ENCODE measurements at regions of chr9 and their contacts with region 1.

Region 1: GRCh38 chr9:121213136-121213806 is 11.6 kb upstream of the RAB14 start:
- DNase-seq: peak; percentile 93 to 95
- H3K4me3 ChIP-seq: no peak overlapping the region
- H3K27ac ChIP-seq: peak overlapping the region in 4 of 5 donors; percentile 28 to 72 (median 60)
- H3K4me1 ChIP-seq: peaks cover 0 to 10% (median 4%) of the 10 kb centered on the region in 4 donors
- H3K27me3 ChIP-seq: no peaks in the 10 kb centered on the region
- CTCF ChIP-seq: peak in 5 of 7 experiments; percentile 87 to 93 (median 92)
- EP300 ChIP-seq: no peak
- POLR2A ChIP-seq: no peak

Region 2: DNA sequence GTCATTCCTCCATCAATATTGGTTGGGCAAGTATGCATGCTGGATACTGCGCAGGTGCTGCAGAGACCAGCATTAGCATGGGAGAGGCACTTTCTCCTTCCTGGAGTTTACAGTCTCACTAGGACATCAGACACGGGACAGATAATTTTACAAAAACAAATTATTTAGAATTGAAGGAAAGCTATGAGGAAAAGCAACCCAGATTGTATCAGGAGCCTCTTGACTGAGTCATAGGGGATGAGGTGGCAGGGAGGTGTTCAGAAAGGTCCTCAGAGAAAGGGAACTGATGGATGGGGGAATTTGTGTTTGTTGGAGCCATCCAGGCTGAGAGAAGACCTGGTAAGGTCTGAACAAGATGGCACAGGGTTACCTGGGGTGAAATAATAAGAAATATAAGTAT is 12.9 kb after region 1 on chr9:
- intact Hi-C with region 1: no loop called
- DNase-seq: no peak
- H3K4me3 ChIP-seq: no peak overlapping the region
- H3K27ac ChIP-seq: no peak overlapping the region
- H3K4me1 ChIP-seq: peaks cover 0 to 8% (median 3%) of the 10 kb centered on the region in 4 donors
- H3K27me3 ChIP-seq: no peaks in the 10 kb centered on the region
- CTCF ChIP-seq: no peak
- EP300 ChIP-seq: no peak
- POLR2A ChIP-seq: no peak

Region 3: GRCh38 chr9:121267689-121268597 is 54.7 kb after region 1 on chr9 and contains the start of gene GSN:
- intact Hi-C with region 1: loop called (anchors 5 kb)
- DNase-seq: peak; percentile 88 to 94
- H3K4me3 ChIP-seq: peak within 1 kb of the TSS; percentile 79 to 90 (median 88)
- H3K27ac ChIP-seq: peak within 1 kb of the TSS; percentile 93 to 96 (median 95)
- H3K4me1 ChIP-seq: peaks cover 40 to 64% (median 51%) of the 10 kb centered on the region in 4 donors
- H3K27me3 ChIP-seq: no peaks in the 10 kb centered on the region
- CTCF ChIP-seq: peak in 1 of 7 experiments; percentile 9
- EP300 ChIP-seq: no peak
- POLR2A ChIP-seq: peak in 1 of 4 donors; percentile 62
- total RNA-seq, gene GSN: 385 to 909 (median 565) TPM

Region 4: DNA sequence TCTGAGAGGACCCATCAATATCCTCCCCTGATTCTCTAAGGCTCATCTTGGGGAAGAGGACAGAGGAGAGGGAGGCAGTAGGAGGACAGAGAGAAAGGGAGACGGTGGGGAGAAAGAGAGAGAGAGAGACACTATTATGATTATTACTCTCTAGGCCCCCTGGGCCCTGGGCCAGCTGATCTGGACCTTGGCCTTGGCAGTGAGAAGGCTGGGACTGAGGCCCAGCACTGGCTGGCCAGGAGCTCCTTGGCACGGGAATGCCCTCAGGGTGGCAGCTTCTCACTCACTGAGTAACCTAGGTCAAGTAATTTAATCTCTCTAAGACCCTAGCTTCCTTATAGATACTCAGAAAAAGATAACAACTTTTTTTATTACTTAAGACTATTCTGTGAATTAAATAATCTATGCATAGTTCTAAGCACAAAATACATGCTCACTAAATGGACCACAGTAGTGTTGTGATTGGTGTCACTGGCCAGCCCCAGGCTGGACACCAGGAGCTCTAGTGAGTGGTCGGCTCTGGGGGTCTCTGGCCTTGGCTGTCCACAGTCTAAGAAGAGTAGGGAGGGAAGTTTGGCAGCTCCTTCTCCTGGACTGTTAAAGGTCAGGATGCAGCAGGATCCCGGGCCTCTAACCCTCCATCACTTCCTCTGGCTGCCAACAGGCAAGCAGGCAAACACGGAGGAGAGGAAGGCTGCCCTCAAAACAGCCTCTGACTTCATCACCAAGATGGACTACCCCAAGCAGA is 104.6 kb after region 1 on chr9:
- intact Hi-C with region 1: loop called (anchors 10 kb)
- DNase-seq: peak in 1 of 2 donors; percentile 79
- H3K4me3 ChIP-seq: no peak overlapping the region
- H3K27ac ChIP-seq: peak overlapping the region; percentile 19 to 96 (median 86)
- H3K4me1 ChIP-seq: peaks cover 15 to 78% (median 52%) of the 10 kb centered on the region in 4 donors
- H3K27me3 ChIP-seq: no peaks in the 10 kb centered on the region
- CTCF ChIP-seq: no peak
- EP300 ChIP-seq: no peak
- POLR2A ChIP-seq: no peak

Region 5: DNA sequence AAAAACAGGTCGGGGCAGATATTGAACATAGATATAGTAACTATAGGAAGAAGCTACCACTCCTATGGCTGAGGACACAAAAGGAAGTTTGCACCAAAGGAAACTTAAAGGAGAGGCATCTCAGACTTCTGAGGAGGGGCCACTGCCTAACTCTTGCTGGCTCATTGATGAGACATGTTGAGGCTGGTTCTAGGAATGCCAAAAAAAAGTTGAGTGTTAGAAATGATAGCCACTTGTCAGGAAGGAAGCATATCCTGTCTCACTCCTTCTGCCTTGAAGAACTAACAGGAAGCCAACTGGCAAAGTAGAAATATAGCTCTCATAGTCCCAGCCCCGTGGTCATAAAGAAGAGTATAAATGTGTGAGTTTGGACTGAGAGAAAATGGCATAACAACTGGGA is 180.0 kb after region 1 on chr9:
- intact Hi-C with region 1: loop called (anchors 5 kb)
- DNase-seq: no peak
- H3K4me3 ChIP-seq: no peak overlapping the region
- H3K27ac ChIP-seq: no peak overlapping the region
- H3K4me1 ChIP-seq: peaks cover 0 to 12% (median 0%) of the 10 kb centered on the region in 4 donors
- H3K27me3 ChIP-seq: no peaks in the 10 kb centered on the region
- CTCF ChIP-seq: no peak
- EP300 ChIP-seq: no peak
- POLR2A ChIP-seq: no peak

Measured in stomach (tissue), 19 donors.